CD8-positive, alpha-beta memory T cell (primary cell): ENCODE measurements at regions of chr6 and their contacts with region 1.

Region 1: GRCh38 chr6:125191916-125192609 is 38.5 kb downstream of the TPD52L1 start:
- DNase-seq: peak; percentile 3 to 64 (median 29)
- H3K4me3 ChIP-seq: no peak overlapping the region
- H3K4me3 Mint-ChIP-seq: no peak overlapping the region
- H3K27ac ChIP-seq: no peak overlapping the region
- H3K27ac Mint-ChIP-seq: no peak overlapping the region
- H3K4me1 ChIP-seq: no peaks in the 10 kb centered on the region
- H3K4me1 Mint-ChIP-seq: peaks cover 1 to 5% (median 3%) of the 10 kb centered on the region in 3 donors
- H3K27me3 ChIP-seq: no peaks in the 10 kb centered on the region
- H3K27me3 Mint-ChIP-seq: peaks cover 6 to 9% of the 10 kb centered on the region in 2 donors

Region 2: GRCh38 chr6:124694139-124694782 is 497.8 kb before region 1 on chr6:
- CTCF ChIA-PET with region 1: no interaction called
- POLR2A ChIA-PET with region 1: no interaction called
- DNase-seq: no peak
- H3K4me3 ChIP-seq: no peak overlapping the region
- H3K4me3 Mint-ChIP-seq: no peak overlapping the region
- H3K27ac ChIP-seq: no peak overlapping the region
- H3K27ac Mint-ChIP-seq: no peak overlapping the region
- H3K4me1 ChIP-seq: no peaks in the 10 kb centered on the region
- H3K4me1 Mint-ChIP-seq: no peaks in the 10 kb centered on the region
- H3K27me3 ChIP-seq: no peaks in the 10 kb centered on the region
- H3K27me3 Mint-ChIP-seq: no peaks in the 10 kb centered on the region

Region 3: GRCh38 chr6:125050663-125051318 is 141.3 kb before region 1 on chr6:
- CTCF ChIA-PET with region 1: no interaction called
- POLR2A ChIA-PET with region 1: no interaction called
- DNase-seq: no peak
- H3K4me3 ChIP-seq: no peak overlapping the region
- H3K4me3 Mint-ChIP-seq: no peak overlapping the region
- H3K27ac ChIP-seq: no peak overlapping the region
- H3K27ac Mint-ChIP-seq: no peak overlapping the region
- H3K4me1 ChIP-seq: no peaks in the 10 kb centered on the region
- H3K4me1 Mint-ChIP-seq: no peaks in the 10 kb centered on the region
- H3K27me3 ChIP-seq: no peaks in the 10 kb centered on the region
- H3K27me3 Mint-ChIP-seq: no peaks in the 10 kb centered on the region

Region 4: DNA sequence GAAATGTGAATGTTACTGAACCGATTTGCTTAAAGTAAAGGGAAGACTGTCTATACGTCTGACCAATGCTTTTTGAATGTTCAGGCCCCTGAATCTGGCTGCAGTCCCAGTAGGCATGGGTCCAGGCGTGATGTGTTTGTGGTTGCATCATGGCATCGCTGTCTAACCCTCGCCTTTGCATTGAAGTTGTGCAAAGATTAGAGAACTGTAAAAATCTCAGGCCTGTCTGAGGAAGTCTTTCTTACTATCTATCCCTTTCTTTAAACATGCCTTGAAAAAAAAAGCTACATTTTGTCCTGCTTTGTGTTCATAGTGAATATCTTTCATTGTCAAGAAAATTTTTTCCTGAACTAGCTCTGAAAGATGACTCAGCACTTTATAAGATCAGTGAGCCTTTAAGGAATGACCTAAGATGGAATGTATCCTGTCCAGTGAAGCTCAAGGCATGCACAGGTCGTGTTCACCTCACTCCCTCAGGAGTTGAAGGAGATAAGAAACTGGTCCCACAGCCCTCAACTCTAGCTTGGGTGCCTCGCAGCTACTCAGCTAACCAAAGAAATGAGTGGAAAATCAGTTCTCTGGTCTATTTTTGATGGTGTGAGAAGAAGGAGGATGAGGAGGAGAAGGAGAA is 10.0 kb after region 1 on chr6:
- CTCF ChIA-PET with region 1: interaction called, 12 read pairs
- POLR2A ChIA-PET with region 1: no interaction called
- DNase-seq: no peak
- H3K4me3 ChIP-seq: no peak overlapping the region
- H3K4me3 Mint-ChIP-seq: no peak overlapping the region
- H3K27ac ChIP-seq: peak overlapping the region; percentile 40
- H3K27ac Mint-ChIP-seq: no peak overlapping the region
- H3K4me1 ChIP-seq: no peaks in the 10 kb centered on the region
- H3K4me1 Mint-ChIP-seq: no peaks in the 10 kb centered on the region
- H3K27me3 ChIP-seq: no peaks in the 10 kb centered on the region
- H3K27me3 Mint-ChIP-seq: peaks cover 6 to 20% of the 10 kb centered on the region in 2 donors

Region 5: DNA sequence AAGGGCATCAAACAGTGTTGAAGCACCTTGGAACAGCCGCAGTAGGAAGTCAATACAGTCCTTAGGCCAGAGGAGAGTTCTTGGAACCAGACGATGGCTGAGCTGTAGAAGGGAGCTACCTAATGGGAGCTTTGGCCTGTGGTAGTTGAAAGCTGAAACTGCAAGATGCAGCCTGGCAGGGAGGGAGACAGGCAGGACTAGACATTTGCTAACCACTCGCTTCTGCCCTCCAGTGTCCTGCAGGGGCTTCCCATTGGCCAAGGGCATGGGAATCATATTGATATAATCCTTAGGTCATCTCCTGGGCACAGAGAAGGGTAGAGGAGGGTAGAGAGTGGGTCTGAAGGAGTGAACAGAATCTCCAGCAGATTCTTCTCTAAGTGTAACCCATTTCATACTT is 21.9 kb after region 1 on chr6:
- CTCF ChIA-PET with region 1: no interaction called
- POLR2A ChIA-PET with region 1: no interaction called
- DNase-seq: no peak
- H3K4me3 ChIP-seq: no peak overlapping the region
- H3K4me3 Mint-ChIP-seq: no peak overlapping the region
- H3K27ac ChIP-seq: no peak overlapping the region
- H3K27ac Mint-ChIP-seq: no peak overlapping the region
- H3K4me1 ChIP-seq: no peaks in the 10 kb centered on the region
- H3K4me1 Mint-ChIP-seq: no peaks in the 10 kb centered on the region
- H3K27me3 ChIP-seq: no peaks in the 10 kb centered on the region
- H3K27me3 Mint-ChIP-seq: peaks cover 13 to 14% of the 10 kb centered on the region in 2 donors